AG04450 (cell line): ENCODE measurements at regions of chr12 and their contacts with region 1.

Region 1: GRCh38 chr12:54337280-54337842 is 12.4 kb downstream of the COPZ1 start:
- DNase-seq: no peak
- H3K4me3 ChIP-seq: no peak overlapping the region
- H3K27ac ChIP-seq: no peak overlapping the region
- H3K27me3 ChIP-seq: no peaks in the 10 kb centered on the region
- CTCF ChIP-seq: peak; percentile 11; the same call in 1 of the 2 replicates

Region 2: DNA sequence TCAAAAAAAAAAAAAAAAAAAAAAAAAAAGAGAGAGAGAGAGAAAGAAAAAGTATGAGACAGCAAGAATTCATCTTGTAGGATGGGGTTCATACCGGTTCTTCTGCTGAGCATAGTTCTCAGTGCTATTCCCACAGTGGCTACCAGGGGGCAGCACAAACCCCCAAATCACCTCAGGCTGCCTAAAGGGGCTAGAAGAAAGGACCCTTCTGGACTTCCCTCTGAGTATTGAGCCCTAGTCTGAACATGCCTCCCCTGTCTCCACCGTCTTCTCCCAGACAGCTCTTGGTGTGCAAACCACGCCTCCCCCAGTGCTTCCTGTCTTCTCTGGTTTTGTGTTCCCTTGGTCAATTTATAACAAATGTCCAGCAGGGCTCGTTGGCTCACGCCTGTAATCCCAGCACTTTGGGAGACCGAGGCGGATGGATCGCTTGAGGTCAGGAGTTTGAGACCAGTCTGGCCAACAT is 117.2 kb before region 1 on chr12:
- CTCF ChIA-PET with region 1: interaction called, 17 read pairs
- POLR2A ChIA-PET with region 1: interaction called, 8 read pairs
- DNase-seq: peak; percentile 53
- H3K4me3 ChIP-seq: no peak overlapping the region
- H3K27ac ChIP-seq: no peak overlapping the region
- H3K27me3 ChIP-seq: no peaks in the 10 kb centered on the region
- CTCF ChIP-seq: peak; percentile 88

Region 3: GRCh38 chr12:54240971-54241588 is 96.3 kb before region 1 on chr12:
- CTCF ChIA-PET with region 1: no interaction called
- POLR2A ChIA-PET with region 1: no interaction called
- DNase-seq: no peak
- H3K4me3 ChIP-seq: no peak overlapping the region
- H3K27ac ChIP-seq: no peak overlapping the region
- H3K27me3 ChIP-seq: no peaks in the 10 kb centered on the region
- CTCF ChIP-seq: no peak